Panc1 (cell line): ENCODE measurements at regions of chr10 and their contacts with region 1.

Region 1: DNA sequence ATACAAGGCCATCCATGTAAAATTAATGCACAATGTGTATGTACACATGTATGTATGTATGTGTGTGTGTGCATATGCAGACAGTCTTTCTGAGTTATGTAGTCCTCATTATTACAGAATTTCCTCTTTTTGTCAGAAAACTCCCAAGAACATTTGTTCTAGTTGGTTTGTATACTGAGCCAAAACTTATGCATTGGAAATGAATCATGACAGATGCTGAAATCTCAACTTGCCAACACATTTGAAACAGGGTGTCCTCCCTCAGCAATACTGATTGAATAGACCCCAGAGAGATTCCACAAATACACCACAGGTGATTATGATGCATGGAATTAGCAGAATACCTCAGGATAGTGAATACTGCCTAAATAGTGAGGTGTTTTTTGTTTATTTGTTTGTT is 472.9 kb upstream of the PCDH15 start:
- DNase-seq: no peak
- ATAC-seq: no peak
- H3K4me3 ChIP-seq: no peak overlapping the region
- H3K27ac ChIP-seq: no peak overlapping the region
- H3K4me1 ChIP-seq: no peaks in the 10 kb centered on the region
- H3K27me3 ChIP-seq: no peaks in the 10 kb centered on the region
- CTCF ChIP-seq: no peak

Region 2: DNA sequence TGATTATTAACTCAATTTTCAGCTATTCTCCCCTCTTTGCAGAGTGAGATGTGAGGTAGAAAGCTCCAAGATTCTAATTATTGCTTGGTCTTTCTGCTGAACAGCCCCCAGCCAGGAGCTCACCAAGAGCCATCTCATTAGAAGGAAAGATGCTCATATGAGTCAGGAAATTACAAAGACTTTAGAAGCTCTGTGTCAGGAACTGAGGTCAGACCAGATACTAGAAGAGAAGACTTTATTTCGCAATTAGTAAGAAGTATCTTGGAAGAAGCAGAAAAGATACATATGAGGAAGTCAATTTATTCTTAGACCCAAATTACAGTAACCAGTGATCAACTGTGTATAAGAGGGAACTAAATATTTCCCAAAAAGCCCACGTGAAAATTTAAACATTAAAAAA is 460.2 kb after region 1 on chr10:
- CTCF ChIA-PET with region 1: no interaction called
- POLR2A ChIA-PET with region 1: no interaction called
- in situ Hi-C with region 1: no loop called
- intact Hi-C with region 1: loop called (anchors 10 kb)
- DNase-seq: no peak
- ATAC-seq: no peak
- H3K4me3 ChIP-seq: no peak overlapping the region
- H3K27ac ChIP-seq: no peak overlapping the region
- H3K4me1 ChIP-seq: no peaks in the 10 kb centered on the region
- H3K27me3 ChIP-seq: no peaks in the 10 kb centered on the region
- CTCF ChIP-seq: no peak